ENCODE measurements at regions of chr22 and their contacts with region 1.

Region 1: DNA sequence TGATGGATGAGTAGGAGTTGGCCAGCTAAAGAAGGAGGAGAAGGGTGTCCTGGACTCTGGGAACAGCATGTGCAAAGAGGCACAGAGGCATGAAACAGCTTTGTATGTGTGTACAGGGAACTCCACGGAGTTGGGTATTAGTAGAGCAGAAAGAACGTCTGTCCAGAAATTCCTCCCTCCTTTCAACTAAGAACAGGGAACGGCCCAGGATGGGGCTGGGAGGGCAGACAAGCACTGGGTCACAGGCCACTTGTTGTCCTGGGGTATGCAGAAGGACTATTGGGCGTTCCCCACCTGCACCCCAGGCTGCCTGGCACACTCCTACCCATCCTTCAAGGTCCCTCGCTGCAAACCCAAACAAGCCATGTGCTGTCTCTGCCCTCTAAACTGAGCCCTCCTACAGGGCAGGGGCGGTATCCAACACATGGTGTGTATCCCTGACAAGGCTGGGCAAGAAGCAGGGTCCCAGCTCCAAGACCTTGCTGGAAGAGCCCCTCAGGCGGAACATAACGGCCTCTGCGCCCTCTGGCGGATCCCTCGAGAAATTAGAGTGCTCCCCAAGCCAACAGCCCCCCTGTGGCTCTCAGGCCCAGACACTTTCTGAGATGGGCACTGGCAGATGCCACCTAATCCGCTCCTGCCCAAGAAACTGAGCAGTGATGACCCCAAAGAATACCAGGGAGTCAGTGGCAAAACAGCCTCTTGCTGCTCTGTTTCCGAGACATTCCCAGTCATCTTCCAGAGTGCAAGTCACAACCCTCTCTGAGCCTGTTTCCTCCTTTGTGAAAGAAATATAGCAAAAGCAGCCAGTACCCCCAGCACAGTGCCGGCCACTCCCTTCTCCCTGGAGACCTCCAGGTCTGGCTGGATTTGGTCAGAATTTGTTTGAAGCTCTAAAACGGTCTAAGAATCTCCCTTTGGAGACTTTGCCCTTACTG is 1.6 kb upstream of the ELFN2 start:
- DNase-seq: peak; percentile 53 to 64
- ATAC-seq: peak; percentile 28 to 74; a peak in 3 of 6 replicates
- H3K4me3 ChIP-seq: no peak overlapping the region
- H3K27ac ChIP-seq: peak overlapping the region; percentile 64 to 97
- H3K4me1 ChIP-seq: peaks cover 64% of the 10 kb centered on the region
- CTCF ChIP-seq: peak; percentile 74
- EP300 ChIP-seq: no peak
- POLR2A ChIP-seq: no peak
- RAD21 ChIP-seq: peak; percentile 60 to 64

Region 2: GRCh38 chr22:37316875-37317371 is 112.0 kb before region 1 on chr22:
- CTCF ChIA-PET with region 1: interaction called, 130 read pairs
- POLR2A ChIA-PET with region 1: interaction called, 3 read pairs
- DNase-seq: peak; percentile 84 to 87
- ATAC-seq: peak; percentile 79 to 95
- H3K4me3 ChIP-seq: no peak overlapping the region
- H3K27ac ChIP-seq: peak overlapping the region; percentile 33 to 85
- H3K4me1 ChIP-seq: peaks cover 55% of the 10 kb centered on the region
- CTCF ChIP-seq: peak; percentile 71
- EP300 ChIP-seq: no peak
- POLR2A ChIP-seq: no peak
- RAD21 ChIP-seq: peak; percentile 96

Region 3: DNA sequence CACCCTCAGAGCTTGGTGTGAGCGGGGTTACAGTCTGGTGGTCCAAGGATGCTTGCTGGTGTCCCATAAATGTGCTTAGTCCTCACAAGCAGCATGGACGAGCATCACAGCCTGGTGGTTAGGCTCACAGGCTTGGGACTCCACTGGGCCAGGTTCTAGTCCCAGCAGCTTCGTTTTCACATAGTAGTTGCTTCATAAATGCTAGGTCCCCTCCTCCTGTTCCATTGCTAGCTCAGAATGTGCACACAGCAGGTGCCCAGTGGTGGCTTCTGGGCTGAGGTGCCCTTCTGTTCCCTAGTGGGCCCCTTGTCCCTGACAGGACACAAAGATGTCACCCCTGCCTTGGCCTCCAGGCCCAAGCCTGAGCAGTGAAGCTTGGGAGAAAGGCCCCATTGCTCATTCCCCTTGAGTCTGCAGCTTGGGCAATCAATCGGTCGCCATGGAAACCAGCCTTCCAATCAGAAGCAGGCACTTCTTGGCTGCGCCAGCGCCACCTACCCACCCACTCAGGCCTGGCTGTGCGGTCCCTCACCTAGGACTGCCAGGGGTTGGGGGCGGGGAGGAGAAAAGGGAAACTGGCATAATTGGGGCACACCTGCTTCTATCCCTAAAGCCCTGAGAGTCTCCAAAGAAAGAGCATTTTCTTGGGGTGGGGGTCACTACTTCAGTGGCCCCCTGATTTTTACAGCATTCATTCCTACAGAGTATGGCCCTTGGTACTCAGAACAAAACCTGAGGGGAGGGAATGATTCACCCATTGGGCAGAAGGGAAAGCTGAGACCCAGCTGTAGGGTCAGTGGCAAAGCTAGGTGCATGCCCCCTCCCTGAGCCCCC is 98.5 kb before region 1 on chr22:
- CTCF ChIA-PET with region 1: interaction called, 40 read pairs
- POLR2A ChIA-PET with region 1: no interaction called
- DNase-seq: peak; percentile 79 to 87
- ATAC-seq: peak; percentile 62 to 77
- H3K4me3 ChIP-seq: no peak overlapping the region
- H3K27ac ChIP-seq: peak overlapping the region; percentile 76 to 94
- H3K4me1 ChIP-seq: peaks cover 71% of the 10 kb centered on the region
- CTCF ChIP-seq: peak; percentile 24; the same call in 2 of the 3 replicates
- EP300 ChIP-seq: no peak
- POLR2A ChIP-seq: no peak
- RAD21 ChIP-seq: no peak

Region 4: GRCh38 chr22:37409459-37410050 is 19.4 kb before region 1 on chr22:
- CTCF ChIA-PET with region 1: interaction called, 11 read pairs
- POLR2A ChIA-PET with region 1: no interaction called
- DNase-seq: no peak
- ATAC-seq: no peak
- H3K4me3 ChIP-seq: no peak overlapping the region
- H3K27ac ChIP-seq: no peak overlapping the region
- H3K4me1 ChIP-seq: no peaks in the 10 kb centered on the region
- CTCF ChIP-seq: no peak
- EP300 ChIP-seq: no peak
- POLR2A ChIP-seq: no peak
- RAD21 ChIP-seq: no peak

Region 5: GRCh38 chr22:37448511-37449127 is 19.7 kb after region 1 on chr22:
- CTCF ChIA-PET with region 1: interaction called, 114 read pairs
- POLR2A ChIA-PET with region 1: no interaction called
- DNase-seq: no peak
- ATAC-seq: no peak; a peak in 1 of 6 replicates
- H3K4me3 ChIP-seq: no peak overlapping the region
- H3K27ac ChIP-seq: peak overlapping the region in 1 of 2 experiments; percentile 58; a peak in 1 of 6 replicates
- H3K4me1 ChIP-seq: 0 out of 3 replicates have a peak, but pooled peaks cover 7% of the 10 kb centered on the region
- CTCF ChIP-seq: no peak
- EP300 ChIP-seq: no peak
- POLR2A ChIP-seq: no peak
- RAD21 ChIP-seq: no peak

Measured in A549 (cell line).